ENCODE measurements at regions of chr10 and their contacts with region 1.

Region 1: DNA sequence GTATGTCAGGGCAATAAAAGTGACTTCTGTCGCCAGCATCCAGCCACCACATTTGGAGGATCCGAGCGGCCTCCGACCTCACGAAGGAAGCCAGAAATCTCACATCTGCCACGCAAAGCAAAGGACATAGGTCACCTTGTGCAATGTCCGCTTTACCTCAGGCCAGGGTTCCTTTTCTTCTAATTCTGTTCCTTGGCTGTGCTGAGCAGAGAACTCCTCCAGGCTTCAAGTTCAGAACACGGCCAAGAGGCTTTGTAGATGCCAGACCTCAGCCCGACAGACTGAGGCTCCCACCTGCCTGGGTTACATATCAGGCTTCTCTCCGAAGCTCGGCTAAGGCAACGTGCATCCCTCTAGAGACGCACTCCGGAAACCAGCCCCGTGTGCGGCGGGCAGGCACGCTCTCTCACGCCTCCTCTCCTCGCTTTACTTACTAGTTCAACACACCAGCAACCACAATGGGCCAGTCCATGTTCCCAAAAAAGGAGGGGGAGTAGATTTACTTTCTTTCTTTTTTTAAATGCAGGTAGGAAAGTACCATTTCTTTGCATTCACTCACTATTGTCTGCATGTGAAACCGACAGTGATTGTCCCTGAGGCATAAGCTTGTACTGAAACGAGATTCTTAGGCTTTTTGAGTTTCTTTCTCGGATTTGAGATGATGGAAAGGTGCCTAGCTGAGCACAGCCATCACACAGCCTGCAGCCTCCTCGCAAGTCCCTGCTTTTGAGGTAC is 122.4 kb upstream of the AFAP1L2 start:
- DNase-seq: peak; percentile 93
- H3K4me3 Mint-ChIP-seq: peak overlapping the region; percentile 96
- H3K27ac Mint-ChIP-seq: peak overlapping the region; percentile 99
- H3K4me1 Mint-ChIP-seq: peaks cover 39% of the 10 kb centered on the region
- H3K27me3 Mint-ChIP-seq: no peaks in the 10 kb centered on the region
- CTCF ChIP-seq: no peak

Region 2: DNA sequence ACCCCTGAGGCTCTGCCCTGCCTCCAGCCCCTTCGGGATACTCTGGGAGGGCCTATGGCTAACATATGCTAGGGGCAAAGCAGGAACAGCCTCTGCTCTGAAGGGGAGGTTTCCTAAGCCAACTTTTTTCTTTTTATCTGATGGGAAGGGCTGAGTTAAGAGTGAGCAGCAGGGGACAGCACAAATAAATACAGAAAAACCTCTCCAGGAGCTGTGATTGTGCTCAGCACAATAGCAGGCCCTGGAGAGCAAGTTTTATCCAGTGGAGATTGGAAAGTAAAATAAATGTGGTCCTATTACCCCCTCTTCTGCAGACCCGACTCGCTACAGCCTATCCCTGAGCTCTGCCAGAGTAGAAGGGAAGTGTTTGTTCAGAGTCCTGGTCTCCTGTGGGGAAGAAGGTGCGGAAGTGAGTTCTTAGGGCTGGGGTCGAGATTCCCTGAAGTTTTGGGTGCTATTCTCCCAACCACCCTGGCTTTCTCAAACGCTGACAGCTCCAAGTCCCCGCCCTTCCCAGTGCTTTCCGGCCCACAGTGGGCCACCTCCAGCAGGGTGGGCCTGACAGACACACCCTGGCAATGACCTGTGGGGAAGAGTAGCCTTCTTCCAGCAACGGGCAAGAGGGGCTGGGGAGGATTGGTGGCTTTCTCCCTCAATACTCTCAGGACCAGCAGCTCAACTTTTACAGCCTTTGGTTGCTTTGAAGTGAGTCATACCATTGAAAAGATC is 99.4 kb before region 1 on chr10:
- CTCF ChIA-PET with region 1: no interaction called
- POLR2A ChIA-PET with region 1: no interaction called
- intact Hi-C with region 1: no loop called
- DNase-seq: no peak
- H3K4me3 Mint-ChIP-seq: no peak overlapping the region
- H3K27ac Mint-ChIP-seq: no peak overlapping the region
- H3K4me1 Mint-ChIP-seq: no peaks in the 10 kb centered on the region
- H3K27me3 Mint-ChIP-seq: no peaks in the 10 kb centered on the region
- CTCF ChIP-seq: no peak

Region 3: DNA sequence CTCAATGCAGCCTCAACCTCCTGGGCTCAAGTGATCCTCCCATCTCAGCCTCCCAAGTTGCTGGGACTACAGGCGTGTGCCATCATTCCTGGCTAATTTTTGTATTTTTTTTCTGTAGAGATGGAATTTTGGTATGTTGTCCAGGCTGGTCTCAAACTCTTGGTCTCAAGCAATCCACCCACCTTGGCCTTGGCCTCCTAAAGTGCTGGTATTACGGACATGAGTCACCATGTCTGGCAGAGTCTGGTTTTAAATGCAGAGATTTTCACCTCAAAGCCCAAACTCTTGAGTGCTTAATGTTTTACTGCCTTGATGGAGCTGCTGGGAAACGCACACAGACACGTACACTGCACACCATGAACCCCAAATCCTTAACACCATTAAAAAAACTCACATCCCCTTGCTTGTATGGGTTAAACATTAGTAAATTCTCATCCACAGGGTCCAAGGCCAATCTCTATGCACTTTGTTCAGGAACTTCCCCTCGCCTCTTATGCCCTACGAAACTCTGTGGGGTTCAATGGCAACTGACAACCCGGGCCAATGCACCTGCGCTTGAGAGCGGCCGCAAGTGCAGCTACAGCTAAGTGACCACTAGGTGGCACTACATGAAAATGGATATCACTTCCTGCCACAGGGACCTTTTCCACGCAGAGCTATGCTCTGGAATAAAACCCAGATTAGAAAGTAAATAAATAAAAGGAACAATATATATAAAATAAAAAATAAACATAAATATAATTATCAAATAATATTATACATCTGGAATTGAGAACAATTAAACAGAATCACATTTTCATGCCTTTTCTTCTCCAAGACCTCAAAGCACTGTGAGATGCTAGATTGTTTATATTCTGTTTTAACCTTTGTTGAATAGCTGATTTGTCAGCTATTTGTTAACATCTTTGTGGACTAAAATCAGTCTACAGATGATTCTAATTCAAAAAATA is 55.4 kb before region 1 on chr10:
- CTCF ChIA-PET with region 1: interaction called, 33 read pairs
- POLR2A ChIA-PET with region 1: interaction called, 11 read pairs
- intact Hi-C with region 1: loop called (anchors 1 kb)
- DNase-seq: peak; percentile 75
- H3K4me3 Mint-ChIP-seq: no peak overlapping the region
- H3K27ac Mint-ChIP-seq: no peak overlapping the region
- H3K4me1 Mint-ChIP-seq: peaks cover 6% of the 10 kb centered on the region
- H3K27me3 Mint-ChIP-seq: no peaks in the 10 kb centered on the region
- CTCF ChIP-seq: peak; percentile 80

Region 4: GRCh38 chr10:114486938-114487814 is 39.5 kb before region 1 on chr10:
- CTCF ChIA-PET with region 1: interaction called, 8 read pairs
- POLR2A ChIA-PET with region 1: interaction called, 40 read pairs
- intact Hi-C with region 1: no loop called
- DNase-seq: peak; percentile 37
- H3K4me3 Mint-ChIP-seq: no peak overlapping the region
- H3K27ac Mint-ChIP-seq: no peak overlapping the region
- H3K4me1 Mint-ChIP-seq: peaks cover 16% of the 10 kb centered on the region
- H3K27me3 Mint-ChIP-seq: no peaks in the 10 kb centered on the region
- CTCF ChIP-seq: no peak

Region 5: DNA sequence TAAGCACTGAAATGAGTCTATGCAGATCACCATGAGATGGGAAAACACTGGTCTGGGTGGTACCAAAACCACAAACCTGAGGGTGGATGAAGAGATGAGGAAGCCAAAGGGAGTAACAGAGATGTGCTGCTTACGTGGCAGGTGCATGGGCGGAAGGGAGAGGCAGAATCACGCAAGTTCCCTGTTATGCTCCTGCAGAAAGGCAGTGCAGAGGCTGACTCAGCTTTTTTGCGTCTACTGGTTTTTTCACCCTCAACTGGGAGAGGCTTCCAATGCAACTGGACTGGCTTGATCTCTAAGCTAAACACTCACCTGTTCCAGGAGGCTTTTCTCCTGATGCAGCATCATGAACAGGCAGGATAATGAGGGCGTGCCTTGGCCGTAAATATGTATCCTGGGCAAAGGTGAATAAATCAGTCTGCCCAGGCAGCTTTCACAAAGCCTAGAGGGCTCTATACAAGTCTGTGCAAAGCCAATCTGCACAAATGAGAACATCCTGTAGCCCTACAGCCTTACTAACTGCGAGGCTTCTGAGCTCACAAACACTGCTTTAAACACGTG is 27.0 kb before region 1 on chr10:
- CTCF ChIA-PET with region 1: interaction called, 10 read pairs
- POLR2A ChIA-PET with region 1: interaction called, 481 read pairs
- intact Hi-C with region 1: no loop called
- DNase-seq: peak; percentile 74
- H3K4me3 Mint-ChIP-seq: no peak overlapping the region
- H3K27ac Mint-ChIP-seq: no peak overlapping the region
- H3K4me1 Mint-ChIP-seq: peaks cover 25% of the 10 kb centered on the region
- H3K27me3 Mint-ChIP-seq: no peaks in the 10 kb centered on the region
- CTCF ChIP-seq: no peak

Region 6: GRCh38 chr10:114708717-114709335 is 182.2 kb after region 1 on chr10:
- CTCF ChIA-PET with region 1: interaction called, 4 read pairs
- POLR2A ChIA-PET with region 1: interaction called, 14 read pairs
- intact Hi-C with region 1: no loop called
- DNase-seq: peak; percentile 87
- H3K4me3 Mint-ChIP-seq: no peak overlapping the region
- H3K27ac Mint-ChIP-seq: peak overlapping the region; percentile 30
- H3K4me1 Mint-ChIP-seq: peaks cover 47% of the 10 kb centered on the region
- H3K27me3 Mint-ChIP-seq: no peaks in the 10 kb centered on the region
- CTCF ChIP-seq: no peak

Region 7: DNA sequence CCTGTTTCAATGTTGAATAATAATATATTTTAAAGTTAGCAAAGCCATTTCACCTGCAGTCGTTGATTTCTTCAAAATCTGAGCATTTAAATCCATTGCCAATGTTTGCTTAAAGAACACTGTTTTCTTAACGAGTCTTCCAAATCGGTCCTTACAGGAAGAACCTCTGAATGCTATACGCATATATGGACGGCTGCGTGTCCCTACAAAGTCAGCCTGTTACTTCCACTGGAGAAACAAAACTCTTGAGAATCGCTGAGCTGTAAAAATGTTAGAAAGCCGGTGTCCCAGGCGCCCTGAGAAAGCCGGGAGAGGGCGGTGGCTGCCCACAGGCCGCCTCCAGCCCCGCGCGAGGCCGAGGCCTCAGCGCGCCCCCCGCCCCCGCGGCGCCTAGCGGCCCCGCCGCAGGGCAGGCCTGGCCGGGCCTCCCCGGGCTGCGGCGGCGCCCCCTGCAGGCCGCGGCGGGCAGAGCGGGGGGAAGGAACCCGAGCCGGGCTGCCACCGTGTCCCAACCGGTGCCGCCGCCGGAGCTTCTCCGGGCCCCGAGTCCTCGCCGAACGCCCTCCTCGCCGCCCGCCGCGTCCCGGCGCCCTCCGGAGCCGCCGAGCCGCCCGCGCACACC is 294.7 kb after region 1 on chr10 and contains the start of gene FHIP2A:
- CTCF ChIA-PET with region 1: interaction called, 3 read pairs
- POLR2A ChIA-PET with region 1: interaction called, 19 read pairs
- intact Hi-C with region 1: no loop called
- DNase-seq: peak; percentile 71
- H3K4me3 Mint-ChIP-seq: peak within 1 kb of the TSS; percentile 85
- H3K27ac Mint-ChIP-seq: peak within 1 kb of the TSS; percentile 97
- H3K4me1 Mint-ChIP-seq: peaks cover 20% of the 10 kb centered on the region
- H3K27me3 Mint-ChIP-seq: no peaks in the 10 kb centered on the region
- CTCF ChIP-seq: peak; percentile 34
- total RNA-seq, gene FHIP2A: 17.2 and 25.9 TPM in 2 replicates

Region 8: DNA sequence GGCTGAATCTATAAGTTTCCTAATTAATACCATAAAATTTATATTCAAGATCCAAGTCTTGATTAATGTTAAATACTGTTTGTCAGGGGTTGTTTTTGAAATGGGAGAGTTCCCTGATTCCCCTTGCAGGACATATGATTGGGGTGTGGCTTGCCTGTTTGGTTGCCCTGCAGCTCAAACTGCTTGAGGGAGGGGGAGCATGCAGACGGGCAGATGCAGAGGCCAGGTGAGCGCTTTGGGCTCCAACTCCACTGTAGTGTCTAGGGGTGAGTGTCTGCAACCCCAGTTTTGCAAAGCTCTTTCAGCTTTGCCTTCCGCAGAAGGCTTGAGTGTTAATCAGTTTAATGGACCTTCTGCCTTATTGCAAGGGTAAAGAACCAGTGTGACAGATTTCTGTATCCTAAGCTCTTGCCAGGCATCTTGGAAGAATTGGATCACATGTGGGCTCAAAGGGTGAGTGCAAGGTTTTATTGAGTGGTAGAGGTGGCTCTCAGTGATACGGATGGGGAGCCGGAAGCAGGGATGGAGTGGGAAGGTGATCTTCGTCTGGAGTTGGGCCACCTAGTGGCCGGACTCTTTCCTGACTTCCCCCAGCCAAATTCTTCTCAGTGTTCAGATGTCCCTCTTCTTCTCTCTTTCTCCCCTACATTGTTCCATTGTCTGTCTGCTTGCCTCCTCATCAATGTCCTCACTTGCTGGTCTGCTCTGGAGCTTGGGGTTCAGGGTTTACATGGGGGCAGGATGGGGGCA is 1046.2 kb after region 1 on chr10:
- CTCF ChIA-PET with region 1: no interaction called
- POLR2A ChIA-PET with region 1: no interaction called
- intact Hi-C with region 1: no loop called
- DNase-seq: peak; percentile 32
- H3K4me3 Mint-ChIP-seq: no peak overlapping the region
- H3K27ac Mint-ChIP-seq: no peak overlapping the region
- H3K4me1 Mint-ChIP-seq: no peaks in the 10 kb centered on the region
- H3K27me3 Mint-ChIP-seq: peaks cover 81% of the 10 kb centered on the region
- CTCF ChIP-seq: peak; percentile 34

Measured in MCF 10A (cell line).